PC-3 (cell line): ENCODE measurements at regions of chr15 and their contacts with region 1.

Region 1: GRCh38 chr15:66751541-66751952 is 49.5 kb downstream of the SMAD6 start:
- DNase-seq: peak; percentile 85
- ATAC-seq: peak; percentile 72
- H3K4me3 ChIP-seq: no peak overlapping the region
- H3K27ac ChIP-seq: peak overlapping the region; percentile 48
- H3K4me1 ChIP-seq: peaks cover 57% of the 10 kb centered on the region
- H3K27me3 ChIP-seq: no peaks in the 10 kb centered on the region
- CTCF ChIP-seq: no peak

Region 2: GRCh38 chr15:66685638-66686150 is 65.9 kb before region 1 on chr15:
- CTCF ChIA-PET with region 1: no interaction called
- POLR2A ChIA-PET with region 1: no interaction called
- intact Hi-C with region 1: no loop called
- DNase-seq: peak; percentile 38
- ATAC-seq: peak; percentile 40; the same call in 1 of the 2 replicates
- H3K4me3 ChIP-seq: no peak overlapping the region
- H3K27ac ChIP-seq: no peak overlapping the region
- H3K4me1 ChIP-seq: no peaks in the 10 kb centered on the region
- H3K27me3 ChIP-seq: no peaks in the 10 kb centered on the region
- CTCF ChIP-seq: peak; percentile 63

Region 3: GRCh38 chr15:66720206-66721006 is 31.1 kb before region 1 on chr15:
- CTCF ChIA-PET with region 1: no interaction called
- POLR2A ChIA-PET with region 1: interaction called, 14 read pairs
- intact Hi-C with region 1: no loop called
- DNase-seq: peak; percentile 76
- ATAC-seq: peak; percentile 91
- H3K4me3 ChIP-seq: no peak overlapping the region
- H3K27ac ChIP-seq: no peak overlapping the region
- H3K4me1 ChIP-seq: peaks cover 19% of the 10 kb centered on the region
- H3K27me3 ChIP-seq: no peaks in the 10 kb centered on the region
- CTCF ChIP-seq: no peak

Region 4: DNA sequence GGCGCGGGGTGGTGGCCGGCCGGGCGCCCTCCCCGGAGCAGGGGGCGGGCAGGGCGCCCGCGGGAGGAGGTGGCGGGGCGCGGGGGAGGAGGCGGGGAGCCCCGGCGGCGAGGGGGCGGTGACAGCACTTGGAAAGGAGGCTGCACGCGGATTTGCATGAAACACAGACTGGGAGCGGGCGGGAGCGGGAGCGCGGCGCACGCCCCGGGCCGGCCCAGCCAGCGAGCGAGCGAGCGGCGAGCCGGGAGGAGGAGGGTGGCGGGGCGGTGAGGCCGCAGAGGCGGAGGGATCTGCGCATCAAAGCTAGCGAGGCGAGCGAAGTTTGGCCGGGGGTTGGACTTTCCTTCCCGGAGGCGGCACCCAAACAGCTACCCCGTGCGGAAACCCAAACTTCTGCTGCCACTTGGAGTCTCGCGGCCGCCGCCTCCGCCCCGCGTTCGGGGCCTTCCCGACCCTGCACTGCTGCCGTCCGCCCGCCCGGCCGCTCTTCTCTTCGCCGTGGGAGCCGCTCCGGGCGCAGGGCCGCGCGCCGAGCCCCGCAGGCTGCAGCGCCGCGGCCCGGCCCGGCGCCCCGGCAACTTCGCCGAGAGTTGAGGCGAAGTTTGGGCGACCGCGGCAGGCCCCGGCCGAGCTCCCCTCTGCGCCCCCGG is 314.0 kb after region 1 on chr15 and contains the start of gene SMAD3:
- CTCF ChIA-PET with region 1: no interaction called
- POLR2A ChIA-PET with region 1: no interaction called
- intact Hi-C with region 1: no loop called
- DNase-seq: peak; percentile 90
- ATAC-seq: peak; percentile 76
- H3K4me3 ChIP-seq: peak within 1 kb of the TSS; percentile 100
- H3K27ac ChIP-seq: peak within 1 kb of the TSS; percentile 73
- H3K4me1 ChIP-seq: peaks cover 31% of the 10 kb centered on the region
- H3K27me3 ChIP-seq: no peaks in the 10 kb centered on the region
- CTCF ChIP-seq: no peak
- total RNA-seq, gene SMAD3: 75.6 and 86.4 TPM in 2 replicates